Ovary (tissue), 10 donors: ENCODE measurements at regions of chr3 and their contacts with region 1.

Region 1: GRCh38 chr3:9843715-9844438 is at the start of gene RPUSD3:
- DNase-seq: peak; percentile 98 to 100 (median 99)
- H3K4me3 ChIP-seq: peak within 1 kb of the TSS; percentile 87
- H3K27ac ChIP-seq: peak within 1 kb of the TSS; percentile 34 to 53
- H3K4me1 ChIP-seq: no peaks in the 10 kb centered on the region
- H3K27me3 ChIP-seq: no peaks in the 10 kb centered on the region
- CTCF ChIP-seq: no peak
- EP300 ChIP-seq: no peak
- POLR2A ChIP-seq: peak; percentile 60
- total RNA-seq, gene RPUSD3: 23.3 to 32.2 (median 26.9) TPM

Region 2: DNA sequence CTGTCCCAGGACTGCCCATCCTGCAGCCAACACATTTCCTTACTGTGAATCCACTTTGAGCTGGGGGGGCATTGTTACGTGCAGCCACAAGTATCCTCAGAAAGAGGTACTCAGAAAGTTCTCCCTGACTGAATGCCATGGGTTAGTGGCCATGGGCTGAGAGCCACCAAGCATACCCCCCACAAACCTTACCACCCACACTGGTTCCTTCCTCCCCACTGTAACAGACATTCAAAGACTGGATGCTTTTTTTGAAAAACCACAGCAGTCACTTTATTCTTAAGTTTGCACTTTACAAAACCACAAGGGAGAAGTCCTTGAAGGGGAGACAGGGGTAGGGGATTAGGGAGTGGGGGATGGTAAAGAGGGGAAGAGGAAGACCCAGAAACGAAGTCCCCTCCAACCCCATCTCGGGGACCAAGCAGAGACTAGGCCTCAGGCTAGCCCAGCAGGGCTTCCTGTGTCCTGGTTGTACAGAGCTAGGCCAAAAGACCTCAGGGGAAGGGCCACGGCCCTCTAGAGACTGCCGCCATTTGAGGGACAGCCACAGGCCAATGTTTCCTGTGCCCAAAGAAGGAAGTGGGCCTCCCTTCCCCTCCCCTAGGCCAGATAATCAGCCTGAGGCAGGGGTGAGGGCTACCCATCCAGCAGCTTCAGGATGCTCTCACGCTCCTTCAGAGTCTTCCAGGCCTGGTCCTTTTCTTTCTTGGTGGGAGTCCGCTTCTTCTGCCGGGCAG is 64.0 kb before region 1 on chr3:
- intact Hi-C with region 1: no loop called
- DNase-seq: no peak
- H3K4me3 ChIP-seq: no peak overlapping the region
- H3K27ac ChIP-seq: peak overlapping the region in 1 of 2 donors; percentile 20
- H3K4me1 ChIP-seq: no peaks in the 10 kb centered on the region
- H3K27me3 ChIP-seq: no peaks in the 10 kb centered on the region
- CTCF ChIP-seq: no peak
- EP300 ChIP-seq: no peak
- POLR2A ChIP-seq: no peak

Region 3: GRCh38 chr3:9915254-9916141 is 71.6 kb after region 1 on chr3:
- intact Hi-C with region 1: loop called in 1 of 4 experiments (anchors 5 kb)
- DNase-seq: peak; percentile 77 to 85 (median 79)
- H3K4me3 ChIP-seq: peak overlapping the region; percentile 59
- H3K27ac ChIP-seq: peak overlapping the region; percentile 76 to 82
- H3K4me1 ChIP-seq: peaks cover 13% of the 10 kb centered on the region
- H3K27me3 ChIP-seq: no peaks in the 10 kb centered on the region
- CTCF ChIP-seq: peak in 2 of 3 donors; percentile 53 to 63
- EP300 ChIP-seq: no peak
- POLR2A ChIP-seq: peak; percentile 20

Region 4: GRCh38 chr3:9932843-9933560 is 89.1 kb after region 1 on chr3:
- intact Hi-C with region 1: loop called in 1 of 4 experiments (anchors 5 kb)
- DNase-seq: peak; percentile 64 to 90 (median 78)
- H3K4me3 ChIP-seq: peak overlapping the region; percentile 51
- H3K27ac ChIP-seq: peak overlapping the region; percentile 77 to 87
- H3K4me1 ChIP-seq: peaks cover 12% of the 10 kb centered on the region
- H3K27me3 ChIP-seq: no peaks in the 10 kb centered on the region
- CTCF ChIP-seq: peak in 2 of 3 donors; percentile 83 to 90
- EP300 ChIP-seq: no peak
- POLR2A ChIP-seq: no peak

Region 5: DNA sequence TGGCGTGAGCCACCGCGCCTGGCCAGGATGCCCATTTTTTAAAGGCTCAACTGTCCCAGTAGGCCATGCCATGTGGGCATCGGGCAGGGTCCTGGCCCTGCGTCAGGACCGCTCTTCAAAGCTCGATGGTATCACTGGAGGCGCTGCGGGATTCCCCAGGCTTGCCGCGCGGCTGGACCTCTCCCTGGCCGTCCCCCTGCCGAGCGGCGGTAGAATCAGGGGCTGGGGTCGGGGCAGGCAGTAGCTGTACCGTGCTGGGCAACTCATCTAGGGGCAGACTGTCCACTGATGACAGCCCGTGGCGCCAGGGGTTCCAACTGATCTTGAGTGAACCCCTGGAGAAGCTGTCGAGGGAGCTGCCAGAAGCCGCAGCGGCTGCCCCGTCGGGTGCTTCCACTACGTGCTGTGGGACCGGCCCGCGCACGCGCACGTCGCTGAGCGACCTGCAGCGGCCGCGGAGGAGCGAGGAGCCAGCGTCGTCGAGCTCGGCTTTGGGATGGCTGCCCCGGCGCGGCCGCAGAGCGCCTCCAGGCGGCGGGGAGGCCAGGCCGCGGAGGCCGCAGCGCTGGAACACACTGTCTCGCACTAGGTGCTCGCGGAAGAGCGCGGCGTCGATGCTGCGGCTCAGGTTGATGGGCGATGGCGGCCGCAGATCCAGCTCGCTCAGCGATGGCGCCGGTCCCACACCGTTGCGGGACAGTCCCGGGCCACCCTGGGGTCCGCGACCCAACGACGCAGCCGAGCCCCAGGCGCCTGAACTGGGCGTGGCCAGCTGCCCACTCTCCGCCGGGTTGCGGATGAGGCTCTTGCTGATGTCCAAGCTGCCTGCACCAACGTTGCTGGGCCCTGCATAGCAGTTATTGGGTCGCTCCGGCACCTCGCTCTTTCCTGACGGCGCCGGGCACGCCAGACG is 102.5 kb after region 1 on chr3:
- intact Hi-C with region 1: loop called in 1 of 4 experiments (anchors 10 kb)
- DNase-seq: peak; percentile 88 to 94 (median 89)
- H3K4me3 ChIP-seq: peak overlapping the region; percentile 66
- H3K27ac ChIP-seq: peak overlapping the region; percentile 11 to 57
- H3K4me1 ChIP-seq: peaks cover 5% of the 10 kb centered on the region
- H3K27me3 ChIP-seq: no peaks in the 10 kb centered on the region
- CTCF ChIP-seq: peak; percentile 56 to 87 (median 82)
- EP300 ChIP-seq: no peak
- POLR2A ChIP-seq: peak; percentile 38